GM10248 (cell line): ENCODE measurements at regions of chr5 and their contacts with region 1.

Region 1: DNA sequence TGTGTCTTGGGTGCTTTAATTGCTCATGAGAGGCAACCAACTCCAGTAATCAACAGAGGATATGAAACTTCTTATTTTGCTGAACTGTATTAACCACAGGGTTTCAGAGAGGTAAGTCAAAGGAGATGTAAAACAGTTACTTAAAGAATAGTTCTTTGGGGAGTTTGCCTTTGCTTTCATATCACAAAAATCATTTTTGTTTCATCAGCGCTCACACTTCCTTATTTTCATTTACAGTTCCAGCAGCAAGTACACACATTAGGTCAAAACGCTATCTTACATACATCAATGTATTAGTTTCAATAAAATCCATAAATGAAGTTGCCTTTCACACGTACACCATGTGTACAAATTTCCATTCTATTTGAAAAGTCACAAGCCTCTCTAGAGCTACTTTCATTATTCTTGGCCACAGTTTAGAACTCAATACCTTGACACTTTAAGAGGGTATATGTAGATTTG is 50.1 kb downstream of the ST8SIA4 start:
- DNase-seq: peak; percentile 53
- CTCF ChIP-seq: no peak

Region 2: GRCh38 chr5:100840384-100840783 is 12.6 kb before region 1 on chr5:
- CTCF ChIA-PET with region 1: interaction called, 27 read pairs
- POLR2A ChIA-PET with region 1: no interaction called
- DNase-seq: no peak
- CTCF ChIP-seq: no peak

Region 3: GRCh38 chr5:100872408-100873190 is 19.6 kb after region 1 on chr5:
- CTCF ChIA-PET with region 1: interaction called, 10 read pairs
- POLR2A ChIA-PET with region 1: no interaction called
- DNase-seq: no peak
- CTCF ChIP-seq: no peak